Uterus (tissue), 4 donors: ENCODE measurements at regions of chr1 and their contacts with region 1.

Region 1: GRCh38 chr1:27603681-27604578 is at the start of gene AHDC1:
- DNase-seq: peak; percentile 91 to 93
- H3K4me3 ChIP-seq: peak within 1 kb of the TSS; percentile 63 to 91
- H3K27ac ChIP-seq: peak within 1 kb of the TSS; percentile 92 to 99
- H3K4me1 ChIP-seq: peaks cover 0 to 14% of the 10 kb centered on the region in 2 donors
- H3K27me3 ChIP-seq: no peaks in the 10 kb centered on the region
- CTCF ChIP-seq: peak in 3 of 4 experiments; percentile 10 to 62 (median 48)
- POLR2A ChIP-seq: peak; percentile 92 to 97
- total RNA-seq, gene AHDC1: 11.2 to 179 (median 50.7) TPM

Region 2: DNA sequence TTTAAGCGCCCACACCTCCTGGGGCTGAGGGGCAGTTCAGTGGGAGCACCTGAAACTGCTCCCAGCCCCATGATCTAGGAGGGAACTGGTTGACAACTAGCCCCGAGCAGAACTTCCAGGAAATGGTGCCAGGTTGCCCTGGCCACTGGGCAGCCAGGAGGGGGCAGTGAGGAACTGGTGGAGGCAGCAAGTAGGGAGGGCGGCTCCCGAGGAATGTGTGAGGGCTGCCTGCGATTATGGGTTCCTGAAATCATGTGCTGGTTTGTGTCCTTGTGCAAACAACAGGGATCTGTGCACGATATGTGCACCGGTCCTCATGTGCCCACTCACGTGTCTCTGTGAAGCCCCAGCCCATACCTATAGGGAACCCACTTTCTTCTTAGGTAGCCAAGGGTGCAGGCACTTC is 201.6 kb before region 1 on chr1:
- intact Hi-C with region 1: loop called (anchors 5 kb)
- DNase-seq: peak; percentile 72 to 75
- H3K4me3 ChIP-seq: no peak overlapping the region
- H3K27ac ChIP-seq: peak overlapping the region; percentile 81 to 84
- H3K4me1 ChIP-seq: peaks cover 6 to 23% of the 10 kb centered on the region in 2 donors
- H3K27me3 ChIP-seq: no peaks in the 10 kb centered on the region
- CTCF ChIP-seq: peak; percentile 65 to 69 (median 66)
- POLR2A ChIP-seq: no peak

Region 3: GRCh38 chr1:27473755-27474154 is 130.2 kb before region 1 on chr1:
- intact Hi-C with region 1: no loop called
- DNase-seq: no peak
- H3K4me3 ChIP-seq: peak overlapping the region in 1 of 2 donors; percentile 12
- H3K27ac ChIP-seq: peak overlapping the region in 1 of 2 donors; percentile 40
- H3K4me1 ChIP-seq: peaks cover 0 to 12% of the 10 kb centered on the region in 2 donors
- H3K27me3 ChIP-seq: no peaks in the 10 kb centered on the region
- CTCF ChIP-seq: no peak
- POLR2A ChIP-seq: no peak

Region 4: DNA sequence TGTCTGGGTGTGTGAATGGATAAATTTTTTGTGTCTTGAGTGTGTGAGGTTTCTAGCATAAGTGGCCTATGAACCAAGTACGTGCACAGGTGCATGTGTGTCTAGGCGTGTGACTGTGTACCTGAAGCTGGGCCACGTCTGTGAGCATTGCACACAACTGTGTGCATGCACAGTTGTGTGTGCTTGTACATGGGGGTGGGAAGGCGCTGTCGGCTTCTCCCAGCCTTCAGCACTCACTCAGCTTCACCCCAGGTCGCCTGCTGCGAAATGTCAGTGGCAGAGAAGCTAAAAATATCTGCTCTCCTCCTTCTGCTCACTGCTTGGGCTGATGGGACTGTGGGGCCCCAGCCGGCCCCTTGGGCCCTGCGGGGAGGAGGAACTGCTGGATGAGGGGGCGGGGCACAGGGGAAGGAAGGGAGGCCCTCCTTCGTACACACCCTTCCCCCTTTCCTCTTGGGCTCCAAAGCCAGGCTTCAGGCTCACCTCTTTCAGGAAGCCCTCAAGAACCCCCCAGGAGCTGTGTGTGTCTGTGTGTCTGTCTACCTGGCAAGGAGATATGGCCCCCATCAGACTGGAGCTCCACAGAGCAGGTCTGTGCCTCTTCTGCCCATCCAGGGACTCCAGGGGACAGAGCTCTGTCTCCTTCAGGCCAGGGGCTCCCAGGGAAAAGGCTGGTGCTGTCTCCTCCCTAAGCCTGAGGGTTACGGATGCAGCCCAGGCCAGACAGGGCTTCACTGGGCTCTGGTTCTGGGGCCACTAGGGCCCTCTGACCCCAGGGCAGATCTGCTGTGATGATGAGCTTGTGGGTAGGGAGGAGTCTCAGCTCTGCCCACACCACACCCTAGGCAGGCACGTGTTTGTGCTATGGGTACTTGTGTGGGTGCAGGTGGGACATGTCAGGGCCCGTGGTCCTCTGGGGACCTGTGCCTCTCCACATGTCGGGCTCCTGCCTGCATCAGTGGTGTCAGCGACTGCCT is 78.3 kb before region 1 on chr1:
- intact Hi-C with region 1: loop called (anchors 10 kb)
- DNase-seq: peak; percentile 82 to 86
- H3K4me3 ChIP-seq: peak overlapping the region in 1 of 2 donors; percentile 18
- H3K27ac ChIP-seq: peak overlapping the region; percentile 96 to 98
- H3K4me1 ChIP-seq: peaks cover 5 to 50% of the 10 kb centered on the region in 2 donors
- H3K27me3 ChIP-seq: no peaks in the 10 kb centered on the region
- CTCF ChIP-seq: no peak
- POLR2A ChIP-seq: no peak

Region 5: DNA sequence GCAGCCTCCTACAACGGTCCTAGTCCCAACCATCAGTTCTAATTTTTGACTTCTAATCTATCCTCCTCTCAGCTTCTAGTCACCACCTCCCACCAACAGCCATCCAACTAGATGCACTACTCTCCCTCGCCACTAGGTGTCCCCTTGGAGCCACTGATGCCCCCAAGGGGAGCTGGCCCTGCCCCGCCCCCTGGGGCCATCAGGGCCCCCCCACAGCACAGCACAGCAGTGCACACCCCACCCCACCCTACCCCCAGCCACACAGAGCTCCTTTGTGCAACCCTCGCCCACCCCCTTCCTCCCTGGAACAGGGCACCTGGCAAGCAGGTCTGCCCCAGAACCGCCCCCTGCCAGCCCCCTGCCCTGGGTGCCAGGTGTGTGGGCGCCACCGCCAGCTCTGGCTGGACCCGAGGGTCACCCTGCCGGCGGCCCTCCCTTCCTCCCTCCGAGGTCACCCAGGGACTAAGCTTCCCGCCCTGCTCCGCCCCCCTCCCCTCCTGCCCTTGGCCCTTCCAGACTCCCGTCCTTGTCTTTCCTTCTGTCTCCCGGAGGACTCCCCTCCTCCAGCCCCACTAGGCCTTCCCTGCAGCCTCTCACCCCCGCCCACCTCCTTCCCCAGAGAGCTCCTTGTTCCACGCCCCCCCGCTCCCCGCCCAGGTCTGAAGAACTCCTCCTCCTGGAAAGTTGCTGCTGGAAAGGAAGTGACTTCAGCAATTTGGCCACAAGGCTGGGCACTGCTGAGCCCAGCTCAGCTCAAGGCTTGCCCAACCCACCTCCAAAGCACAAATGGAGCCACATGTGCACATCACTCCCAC is 46.9 kb before region 1 on chr1:
- intact Hi-C with region 1: loop called (anchors 5 kb)
- DNase-seq: peak; percentile 95 to 97
- H3K4me3 ChIP-seq: peak overlapping the region in 1 of 2 donors; percentile 15
- H3K27ac ChIP-seq: peak overlapping the region; percentile 88 to 93
- H3K4me1 ChIP-seq: peaks cover 25 to 43% of the 10 kb centered on the region in 2 donors
- H3K27me3 ChIP-seq: no peaks in the 10 kb centered on the region
- CTCF ChIP-seq: peak; percentile 87 to 92 (median 91)
- POLR2A ChIP-seq: peak in 1 of 2 donors; percentile 12

Region 6: DNA sequence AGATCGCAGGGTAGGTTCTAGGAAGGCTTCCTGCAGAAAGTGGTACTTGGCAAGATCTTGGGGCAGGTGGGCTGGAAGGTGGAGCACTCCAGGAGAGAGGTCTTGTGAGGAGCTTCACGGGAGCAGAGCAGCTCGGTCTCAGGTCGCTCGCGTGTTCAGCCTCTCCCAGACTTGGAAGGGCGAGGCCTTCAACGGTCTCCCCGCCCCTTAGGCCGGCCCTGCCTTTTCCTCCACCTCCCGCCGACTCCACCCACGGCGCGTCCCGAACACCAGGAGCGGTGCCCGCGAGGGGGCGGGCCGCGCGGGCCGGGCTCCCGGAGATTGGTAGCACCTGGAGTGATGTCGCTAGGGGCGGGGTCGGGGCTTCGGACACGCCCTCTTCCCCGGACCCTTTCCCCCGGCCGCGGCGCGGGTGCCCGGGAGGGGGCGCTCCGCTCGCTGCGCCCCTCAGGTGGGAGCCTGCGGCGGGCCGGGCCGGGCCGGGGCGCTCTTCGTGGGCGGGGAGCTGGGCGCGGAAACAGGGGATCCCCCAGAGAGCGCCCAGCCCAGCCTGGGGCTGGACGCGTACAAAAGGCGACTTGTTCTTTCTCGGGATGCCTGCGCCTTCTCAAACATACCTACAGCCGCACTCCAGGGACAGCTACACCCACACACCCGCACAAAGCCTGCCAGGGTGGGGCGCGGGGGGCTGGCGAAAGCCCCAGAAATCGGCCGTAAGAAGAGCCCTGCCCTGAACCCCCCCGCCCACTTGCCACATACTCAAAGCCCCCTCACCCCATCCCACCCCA is 35.4 kb before region 1 on chr1:
- intact Hi-C with region 1: loop called (anchors 5 kb)
- DNase-seq: peak; percentile 96 to 98
- H3K4me3 ChIP-seq: peak overlapping the region in 1 of 2 donors; percentile 31
- H3K27ac ChIP-seq: peak overlapping the region; percentile 94 to 97
- H3K4me1 ChIP-seq: peaks cover 25 to 65% of the 10 kb centered on the region in 2 donors
- H3K27me3 ChIP-seq: no peaks in the 10 kb centered on the region
- CTCF ChIP-seq: peak; percentile 53 to 88 (median 84)
- POLR2A ChIP-seq: peak; percentile 67 to 80

Region 7: DNA sequence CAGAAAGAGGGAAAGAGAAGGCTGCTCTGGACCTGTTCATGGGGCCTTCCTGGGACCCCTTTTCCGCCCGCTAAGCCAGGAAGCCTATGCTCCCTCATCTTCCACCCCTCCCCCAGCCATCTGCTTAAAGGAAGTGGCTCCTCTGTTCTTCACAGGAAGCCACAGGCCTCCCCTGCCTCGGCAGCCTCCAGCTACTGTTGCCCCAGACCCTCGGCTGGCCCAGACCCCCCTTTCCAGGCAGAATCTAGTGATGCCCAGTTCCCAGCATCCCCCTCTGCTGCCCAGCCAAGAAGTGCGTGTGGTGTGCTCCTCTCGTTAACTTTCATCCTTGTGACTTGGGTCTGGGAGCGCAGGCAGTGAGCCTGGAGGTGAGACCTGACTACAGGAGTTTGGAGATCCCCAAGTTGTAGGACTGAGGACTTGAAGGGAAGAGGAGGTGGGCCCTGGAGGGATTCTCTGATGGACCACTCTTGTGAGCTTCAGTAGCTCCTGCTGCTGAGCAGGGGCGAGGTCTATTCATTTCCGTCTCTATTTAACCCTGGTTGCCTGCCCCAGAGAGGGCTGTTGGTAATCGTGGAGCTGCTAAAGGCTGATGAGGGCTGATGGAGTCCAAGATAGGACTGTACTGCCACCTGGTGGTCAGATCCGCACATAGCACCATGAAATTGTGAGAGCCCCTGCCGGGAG is 58.9 kb after region 1 on chr1:
- intact Hi-C with region 1: loop called (anchors 10 kb)
- DNase-seq: peak; percentile 85 to 86
- H3K4me3 ChIP-seq: no peak overlapping the region
- H3K27ac ChIP-seq: peak overlapping the region in 1 of 2 donors; percentile 75
- H3K4me1 ChIP-seq: peaks cover 0 to 3% of the 10 kb centered on the region in 2 donors
- H3K27me3 ChIP-seq: no peaks in the 10 kb centered on the region
- CTCF ChIP-seq: peak; percentile 89 to 98 (median 92)
- POLR2A ChIP-seq: no peak